Heart left ventricle (tissue), 16 donors: ENCODE measurements at regions of chr13 and their contacts with region 1.

Region 1: GRCh38 chr13:60654415-60654814 is 257.4 kb downstream of the TDRD3 start:
- DNase-seq: peak in 3 of 5 donors; percentile 33 to 53 (median 37)
- ATAC-seq: peak; percentile 51 to 81 (median 75)
- H3K4me3 ChIP-seq: no peak overlapping the region
- H3K27ac ChIP-seq: no peak overlapping the region
- H3K4me1 ChIP-seq: no peaks in the 10 kb centered on the region
- H3K27me3 ChIP-seq: no peaks in the 10 kb centered on the region
- CTCF ChIP-seq: peak; percentile 29 to 63 (median 54)
- POLR2A ChIP-seq: no peak

Region 2: DNA sequence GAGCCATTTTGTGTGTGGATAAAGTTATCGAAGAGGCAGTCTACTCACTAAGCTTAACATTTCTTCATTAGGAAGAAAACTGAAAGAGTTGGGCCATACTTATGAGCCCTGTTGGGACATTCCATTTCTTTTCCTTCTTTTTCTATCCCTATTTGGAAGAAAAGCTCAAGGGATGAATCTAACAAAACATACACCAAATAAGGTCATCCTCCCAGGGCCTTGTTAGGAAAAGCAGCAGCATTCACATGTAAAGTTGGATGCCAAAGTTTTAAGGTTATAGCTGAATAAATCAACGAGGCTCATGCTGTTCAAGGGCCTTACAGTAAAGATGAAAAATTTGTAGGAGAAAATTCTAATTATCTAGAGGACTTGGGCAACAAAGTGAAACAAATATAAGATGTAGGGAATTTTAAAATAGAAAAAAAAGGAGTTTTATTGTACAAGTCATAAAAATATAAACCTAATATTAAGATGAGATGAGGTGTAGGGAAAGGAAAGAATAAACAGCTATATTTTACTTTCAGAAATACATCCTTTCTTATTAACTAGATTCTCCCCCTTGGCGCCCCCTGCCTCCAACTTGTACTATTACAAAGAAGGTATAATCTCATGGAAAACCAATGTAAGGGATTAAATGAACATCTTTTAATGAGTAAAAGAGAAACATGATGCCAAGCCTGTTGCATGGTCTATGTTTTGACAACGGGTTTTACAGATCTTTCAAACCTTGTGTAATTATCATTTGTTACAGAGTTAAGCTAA is 600.8 kb after region 1 on chr13:
- intact Hi-C with region 1: loop called in 1 of 10 experiments (anchors 5 kb)
- DNase-seq: no peak
- ATAC-seq: no peak
- H3K4me3 ChIP-seq: no peak overlapping the region
- H3K27ac ChIP-seq: no peak overlapping the region
- H3K4me1 ChIP-seq: no peaks in the 10 kb centered on the region
- H3K27me3 ChIP-seq: no peaks in the 10 kb centered on the region
- CTCF ChIP-seq: peak in 3 of 12 donors; percentile 14 to 15 (median 15)
- POLR2A ChIP-seq: no peak